ENCODE measurements at regions of chr18 and their contacts with region 1.

Region 1: DNA sequence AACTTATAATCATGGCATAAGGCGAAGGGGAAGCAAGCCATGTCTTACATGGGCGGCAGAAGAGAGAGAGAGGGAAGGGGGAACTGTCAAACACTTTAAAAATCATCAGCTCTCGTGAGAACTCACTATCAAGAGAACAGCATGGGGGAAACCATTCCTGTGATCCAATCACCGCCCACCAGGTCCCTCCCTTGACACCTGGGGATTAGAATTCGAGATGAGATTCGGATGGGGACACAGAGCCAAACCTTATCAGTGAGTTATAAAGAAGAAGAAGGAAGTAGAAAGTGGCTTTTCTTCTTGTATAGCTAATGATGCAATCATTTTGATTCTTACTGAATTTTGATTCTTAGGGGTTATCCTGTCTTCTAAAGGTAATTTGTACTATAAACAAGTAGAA is 51.4 kb downstream of the SMCHD1 start:
- DNase-seq: no peak
- ATAC-seq: no peak
- H3K4me3 ChIP-seq: no peak overlapping the region
- H3K4me3 Mint-ChIP-seq: no peak overlapping the region
- H3K27ac ChIP-seq: no peak overlapping the region
- H3K27ac Mint-ChIP-seq: peak overlapping the region; percentile 9
- H3K4me1 ChIP-seq: no peaks in the 10 kb centered on the region
- H3K4me1 Mint-ChIP-seq: peaks cover 29% of the 10 kb centered on the region
- H3K27me3 ChIP-seq: no peaks in the 10 kb centered on the region
- H3K27me3 Mint-ChIP-seq: no peaks in the 10 kb centered on the region
- CTCF ChIP-seq: no peak

Region 2: GRCh38 chr18:2692508-2692907 is 14.4 kb before region 1 on chr18:
- CTCF ChIA-PET with region 1: no interaction called
- POLR2A ChIA-PET with region 1: no interaction called
- intact Hi-C with region 1: loop called in 1 of 2 experiments (anchors 2 kb)
- DNase-seq: no peak
- ATAC-seq: no peak
- H3K4me3 ChIP-seq: no peak overlapping the region
- H3K4me3 Mint-ChIP-seq: no peak overlapping the region
- H3K27ac ChIP-seq: no peak overlapping the region
- H3K27ac Mint-ChIP-seq: peak overlapping the region; percentile 20
- H3K4me1 ChIP-seq: peaks cover 14% of the 10 kb centered on the region
- H3K4me1 Mint-ChIP-seq: peaks cover 46% of the 10 kb centered on the region
- H3K27me3 ChIP-seq: no peaks in the 10 kb centered on the region
- H3K27me3 Mint-ChIP-seq: no peaks in the 10 kb centered on the region
- CTCF ChIP-seq: no peak

Region 3: GRCh38 chr18:2723207-2723606 is 16.3 kb after region 1 on chr18:
- CTCF ChIA-PET with region 1: interaction called, 3 read pairs
- POLR2A ChIA-PET with region 1: interaction called, 5 read pairs
- intact Hi-C with region 1: loop called in 1 of 2 experiments (anchors 2 kb)
- DNase-seq: no peak
- ATAC-seq: no peak
- H3K4me3 ChIP-seq: no peak overlapping the region
- H3K4me3 Mint-ChIP-seq: no peak overlapping the region
- H3K27ac ChIP-seq: peak overlapping the region in 1 of 2 experiments; percentile 2
- H3K27ac Mint-ChIP-seq: peak overlapping the region; percentile 24
- H3K4me1 ChIP-seq: no peaks in the 10 kb centered on the region
- H3K4me1 Mint-ChIP-seq: peaks cover 39% of the 10 kb centered on the region
- H3K27me3 ChIP-seq: no peaks in the 10 kb centered on the region
- H3K27me3 Mint-ChIP-seq: no peaks in the 10 kb centered on the region
- CTCF ChIP-seq: no peak

Region 4: GRCh38 chr18:2741651-2742050 is 34.7 kb after region 1 on chr18:
- CTCF ChIA-PET with region 1: no interaction called
- POLR2A ChIA-PET with region 1: no interaction called
- intact Hi-C with region 1: loop called (anchors 5 kb)
- DNase-seq: no peak
- ATAC-seq: no peak
- H3K4me3 ChIP-seq: no peak overlapping the region
- H3K4me3 Mint-ChIP-seq: no peak overlapping the region
- H3K27ac ChIP-seq: no peak overlapping the region
- H3K27ac Mint-ChIP-seq: no peak overlapping the region
- H3K4me1 ChIP-seq: no peaks in the 10 kb centered on the region
- H3K4me1 Mint-ChIP-seq: peaks cover 13% of the 10 kb centered on the region
- H3K27me3 ChIP-seq: no peaks in the 10 kb centered on the region
- H3K27me3 Mint-ChIP-seq: no peaks in the 10 kb centered on the region
- CTCF ChIP-seq: no peak

Region 5: GRCh38 chr18:2758309-2758708 is 51.4 kb after region 1 on chr18:
- CTCF ChIA-PET with region 1: no interaction called
- POLR2A ChIA-PET with region 1: no interaction called
- intact Hi-C with region 1: loop called in 1 of 2 experiments (anchors 2 kb)
- DNase-seq: no peak
- ATAC-seq: no peak
- H3K4me3 ChIP-seq: no peak overlapping the region
- H3K4me3 Mint-ChIP-seq: no peak overlapping the region
- H3K27ac ChIP-seq: no peak overlapping the region
- H3K27ac Mint-ChIP-seq: peak overlapping the region; percentile 37
- H3K4me1 ChIP-seq: no peaks in the 10 kb centered on the region
- H3K4me1 Mint-ChIP-seq: peaks cover 26% of the 10 kb centered on the region
- H3K27me3 ChIP-seq: no peaks in the 10 kb centered on the region
- H3K27me3 Mint-ChIP-seq: no peaks in the 10 kb centered on the region
- CTCF ChIP-seq: no peak

Region 6: DNA sequence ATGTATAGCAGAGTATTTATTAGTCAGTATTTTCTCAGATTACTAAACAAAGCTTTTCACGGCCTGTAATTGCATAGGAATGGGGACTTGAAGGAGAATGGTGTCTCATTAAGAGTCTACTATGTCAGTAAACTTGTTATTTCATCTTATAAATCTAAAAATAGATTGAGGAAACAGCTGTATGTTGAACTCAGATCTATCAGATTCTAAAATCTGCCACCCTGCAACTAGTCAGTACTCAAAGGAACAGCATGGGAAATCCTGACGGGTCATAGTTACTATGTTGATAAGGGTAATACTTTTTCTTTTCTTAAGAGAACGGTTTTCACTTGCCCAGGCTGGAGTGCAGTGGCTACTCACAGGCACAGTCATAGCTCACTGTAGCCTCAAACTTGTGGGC is 69.7 kb after region 1 on chr18:
- CTCF ChIA-PET with region 1: no interaction called
- POLR2A ChIA-PET with region 1: no interaction called
- intact Hi-C with region 1: loop called in 1 of 2 experiments (anchors 5 kb)
- DNase-seq: no peak
- ATAC-seq: no peak
- H3K4me3 ChIP-seq: no peak overlapping the region
- H3K4me3 Mint-ChIP-seq: no peak overlapping the region
- H3K27ac ChIP-seq: no peak overlapping the region
- H3K27ac Mint-ChIP-seq: no peak overlapping the region
- H3K4me1 ChIP-seq: no peaks in the 10 kb centered on the region
- H3K4me1 Mint-ChIP-seq: peaks cover 2% of the 10 kb centered on the region
- H3K27me3 ChIP-seq: no peaks in the 10 kb centered on the region
- H3K27me3 Mint-ChIP-seq: no peaks in the 10 kb centered on the region
- CTCF ChIP-seq: no peak

Measured in CD8-positive, alpha-beta T cell (primary cell).